ENCODE measurements at regions of chr17 and their contacts with region 1.

Region 1: GRCh38 chr17:36534840-36535668 is at the starts of genes MYO19 and PIGW:
- DNase-seq: peak; percentile 92
- H3K4me3 ChIP-seq: peak within 1 kb of the TSS; percentile 71 to 96 (median 75)
- H3K27ac ChIP-seq: peak within 1 kb of the TSS; percentile 96
- H3K4me1 ChIP-seq: peaks cover 33% of the 10 kb centered on the region
- H3K27me3 ChIP-seq: no peaks in the 10 kb centered on the region
- CTCF ChIP-seq: no peak
- total RNA-seq, gene MYO19: 103 to 123 TPM
- total RNA-seq, gene PIGW: 10.2 to 15.6 TPM

Region 2: GRCh38 chr17:36496018-36496789 is 38.9 kb before region 1 on chr17:
- CTCF ChIA-PET with region 1: no interaction called
- dilution Hi-C with region 1: no loop called
- in situ Hi-C with region 1: no loop called
- intact Hi-C with region 1: no loop called
- DNase-seq: no peak
- H3K4me3 ChIP-seq: no peak overlapping the region
- H3K27ac ChIP-seq: no peak overlapping the region
- H3K4me1 ChIP-seq: no peaks in the 10 kb centered on the region
- H3K27me3 ChIP-seq: no peaks in the 10 kb centered on the region
- CTCF ChIP-seq: no peak

Region 3: GRCh38 chr17:36524428-36524876 is 10.6 kb before region 1 on chr17:
- CTCF ChIA-PET with region 1: no interaction called
- dilution Hi-C with region 1: no loop called
- in situ Hi-C with region 1: no loop called
- intact Hi-C with region 1: loop called (anchors 1 kb)
- DNase-seq: peak; percentile 97
- H3K4me3 ChIP-seq: no peak overlapping the region
- H3K27ac ChIP-seq: peak overlapping the region; percentile 49
- H3K4me1 ChIP-seq: peaks cover 36% of the 10 kb centered on the region
- H3K27me3 ChIP-seq: no peaks in the 10 kb centered on the region
- CTCF ChIP-seq: no peak

Region 4: DNA sequence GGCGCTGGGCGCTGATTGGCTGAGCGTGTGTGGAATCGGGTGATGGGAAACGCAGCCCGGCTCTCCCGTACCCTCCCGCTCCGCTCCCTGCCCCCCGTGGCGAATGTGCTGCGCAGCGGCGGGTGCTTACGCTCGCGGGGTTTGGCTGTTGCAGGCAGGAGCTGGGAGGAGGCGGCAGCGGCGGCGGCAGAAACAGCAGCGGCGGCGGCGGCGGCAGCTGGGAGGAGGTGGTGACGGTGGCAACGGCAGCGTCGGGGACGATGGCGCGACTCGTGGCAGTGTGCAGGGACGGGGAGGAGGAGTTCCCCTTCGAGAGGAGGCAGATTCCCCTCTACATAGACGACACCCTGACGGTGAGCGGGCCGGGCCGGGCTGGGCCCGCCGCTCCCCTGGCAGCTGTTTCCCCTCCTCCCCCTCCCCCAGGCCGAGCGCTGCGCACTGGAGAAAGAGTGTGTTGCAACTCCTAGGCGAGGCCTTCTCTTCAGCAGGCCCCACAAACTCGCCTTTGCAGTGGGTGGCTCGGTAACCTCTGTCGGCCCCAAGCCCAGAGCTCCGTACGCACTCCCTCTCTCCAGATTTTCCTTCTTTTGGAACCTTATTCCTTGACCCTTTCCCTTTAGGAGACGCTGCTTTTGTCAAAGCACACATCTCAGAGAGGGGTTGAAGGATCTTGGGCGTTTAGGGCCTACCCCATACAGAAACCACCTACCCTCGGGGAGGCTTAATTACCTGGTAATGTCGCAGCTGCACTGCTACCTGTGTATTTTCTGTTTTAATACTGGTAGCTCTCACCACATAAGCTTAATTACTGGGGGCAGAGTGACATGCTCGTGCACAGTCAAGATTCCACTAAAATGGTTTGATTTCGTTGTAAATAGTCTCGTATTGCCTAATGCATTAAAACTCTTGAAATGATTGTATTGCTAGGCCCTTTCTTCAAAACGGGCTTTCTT is 10.7 kb after region 1 on chr17:
- CTCF ChIA-PET with region 1: no interaction called
- dilution Hi-C with region 1: no loop called
- in situ Hi-C with region 1: no loop called
- intact Hi-C with region 1: loop called (anchors 1 kb)
- DNase-seq: peak; percentile 97
- H3K4me3 ChIP-seq: peak overlapping the region; percentile 80 to 85 (median 81)
- H3K27ac ChIP-seq: peak overlapping the region; percentile 92
- H3K4me1 ChIP-seq: peaks cover 21% of the 10 kb centered on the region
- H3K27me3 ChIP-seq: no peaks in the 10 kb centered on the region
- CTCF ChIP-seq: no peak

Measured in mammary epithelial cell (primary cell).